ENCODE measurements at regions of chr6 and their contacts with region 1.

Region 1: GRCh38 chr6:90458353-90459224 is 128.3 kb downstream of the MAP3K7 start:
- DNase-seq: peak; percentile 71
- ATAC-seq: peak; percentile 86
- H3K4me3 Mint-ChIP-seq: peak overlapping the region; percentile 51
- H3K27ac Mint-ChIP-seq: peak overlapping the region; percentile 87
- H3K4me1 Mint-ChIP-seq: peaks cover 63% of the 10 kb centered on the region
- H3K27me3 Mint-ChIP-seq: no peaks in the 10 kb centered on the region

Region 2: GRCh38 chr6:90343581-90343980 is 115.0 kb before region 1 on chr6:
- CTCF ChIA-PET with region 1: no interaction called
- POLR2A ChIA-PET with region 1: no interaction called
- DNase-seq: no peak
- ATAC-seq: no peak
- H3K4me3 Mint-ChIP-seq: no peak overlapping the region
- H3K27ac Mint-ChIP-seq: no peak overlapping the region
- H3K4me1 Mint-ChIP-seq: no peaks in the 10 kb centered on the region
- H3K27me3 Mint-ChIP-seq: peaks cover 7% of the 10 kb centered on the region

Region 3: DNA sequence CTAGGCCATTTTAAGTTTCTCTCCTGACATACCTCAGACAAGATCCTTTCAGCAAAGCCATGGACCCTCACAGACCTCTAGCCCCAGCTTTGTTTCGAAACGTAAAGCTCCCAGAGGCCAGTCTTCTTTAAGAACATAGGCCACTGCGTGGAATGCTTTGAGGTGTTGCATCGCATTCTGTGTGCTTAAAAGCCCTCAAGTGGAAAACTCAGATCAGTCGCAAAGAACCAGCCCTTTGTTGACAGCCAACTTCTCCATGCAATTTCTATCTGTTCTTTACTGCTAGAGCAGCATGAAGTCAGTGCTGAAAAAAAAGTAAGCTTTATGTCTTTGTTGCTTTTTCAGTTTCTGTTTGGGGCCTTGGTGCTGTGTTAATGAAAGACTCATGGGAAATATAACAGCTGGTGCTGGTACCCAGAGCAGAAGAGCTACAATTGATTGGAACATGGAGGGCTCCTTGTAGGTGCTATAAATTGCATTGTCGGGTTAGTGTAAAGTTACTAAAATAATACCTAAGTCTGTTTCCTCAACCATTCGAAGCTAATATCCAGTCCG is 14.4 kb before region 1 on chr6:
- CTCF ChIA-PET with region 1: interaction called, 25 read pairs
- POLR2A ChIA-PET with region 1: interaction called, 3 read pairs
- DNase-seq: no peak
- ATAC-seq: no peak
- H3K4me3 Mint-ChIP-seq: no peak overlapping the region
- H3K27ac Mint-ChIP-seq: no peak overlapping the region
- H3K4me1 Mint-ChIP-seq: peaks cover 25% of the 10 kb centered on the region
- H3K27me3 Mint-ChIP-seq: no peaks in the 10 kb centered on the region

Region 4: GRCh38 chr6:90472744-90473143 is 14.2 kb after region 1 on chr6:
- CTCF ChIA-PET with region 1: interaction called, 148 read pairs
- POLR2A ChIA-PET with region 1: interaction called, 19 read pairs
- DNase-seq: peak; percentile 76
- ATAC-seq: peak; percentile 49
- H3K4me3 Mint-ChIP-seq: peak overlapping the region; percentile 24
- H3K27ac Mint-ChIP-seq: peak overlapping the region; percentile 62
- H3K4me1 Mint-ChIP-seq: peaks cover 91% of the 10 kb centered on the region
- H3K27me3 Mint-ChIP-seq: peaks cover 3% of the 10 kb centered on the region

Region 5: GRCh38 chr6:91213229-91213901 is 754.8 kb after region 1 on chr6:
- CTCF ChIA-PET with region 1: no interaction called
- POLR2A ChIA-PET with region 1: no interaction called
- DNase-seq: no peak
- ATAC-seq: no peak
- H3K4me3 Mint-ChIP-seq: no peak overlapping the region
- H3K27ac Mint-ChIP-seq: no peak overlapping the region
- H3K4me1 Mint-ChIP-seq: no peaks in the 10 kb centered on the region
- H3K27me3 Mint-ChIP-seq: no peaks in the 10 kb centered on the region